Psoas muscle (tissue), 8 donors: ENCODE measurements at regions of chr1 and their contacts with region 1.

Region 1: GRCh38 chr1:84620720-84621313 is 46.6 kb upstream of the CTBS start:
- DNase-seq: peak; percentile 74 to 87
- ATAC-seq: peak; percentile 92 to 98 (median 95)
- H3K4me3 ChIP-seq: peak overlapping the region; percentile 74
- H3K27ac ChIP-seq: no peak overlapping the region
- H3K4me1 ChIP-seq: no peaks in the 10 kb centered on the region
- H3K27me3 ChIP-seq: no peaks in the 10 kb centered on the region
- CTCF ChIP-seq: peak; percentile 95

Region 2: DNA sequence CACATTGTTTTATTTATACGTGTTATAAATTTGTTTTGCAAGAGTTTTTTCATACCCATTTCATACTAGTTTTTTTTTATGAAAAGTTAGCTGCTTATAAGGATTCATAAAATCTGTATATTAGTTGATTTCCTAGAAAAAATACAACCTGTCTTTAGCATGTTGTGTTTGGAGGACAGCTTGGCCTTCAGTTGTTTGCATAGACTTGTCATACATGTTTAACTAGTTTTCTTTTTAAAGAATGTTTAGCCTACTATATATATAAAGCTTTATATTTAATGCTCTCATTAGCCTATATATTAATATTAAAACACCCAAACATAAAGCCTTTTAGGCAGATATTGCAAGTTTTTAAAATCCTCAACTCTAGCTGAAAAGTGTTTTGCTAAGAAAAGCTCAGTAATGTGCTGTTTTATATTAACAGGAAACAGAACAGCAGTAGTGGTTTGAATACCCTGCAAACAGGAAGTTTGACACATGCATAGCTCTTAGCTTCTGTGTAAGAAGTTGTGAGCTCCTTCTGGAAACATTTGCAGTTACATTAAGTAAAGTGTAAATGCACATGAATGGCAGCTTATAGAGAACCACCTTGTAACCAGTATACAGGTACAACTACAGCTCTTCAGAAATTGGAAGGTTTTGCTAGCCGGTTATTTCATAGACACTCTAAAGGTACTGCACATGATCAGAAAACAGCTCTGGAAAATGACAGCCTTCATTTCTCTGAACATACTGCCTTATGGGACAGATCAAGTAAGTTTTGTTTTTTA is 476.8 kb before region 1 on chr1 and contains the start of gene PRKACB:
- intact Hi-C with region 1: loop called in 1 of 2 experiments (anchors 10 kb)
- DNase-seq: no peak
- ATAC-seq: no peak
- H3K4me3 ChIP-seq: peak within 1 kb of the TSS; percentile 26
- H3K27ac ChIP-seq: no peak within 1 kb of the TSS
- H3K4me1 ChIP-seq: no peaks in the 10 kb centered on the region
- H3K27me3 ChIP-seq: no peaks in the 10 kb centered on the region
- CTCF ChIP-seq: no peak
- total RNA-seq, gene PRKACB: 4.9 to 24.5 (median 13.6) TPM

Region 3: GRCh38 chr1:84214115-84214956 is 406.5 kb before region 1 on chr1:
- intact Hi-C with region 1: no loop called
- DNase-seq: no peak
- ATAC-seq: no peak
- H3K4me3 ChIP-seq: no peak overlapping the region
- H3K27ac ChIP-seq: no peak overlapping the region
- H3K4me1 ChIP-seq: no peaks in the 10 kb centered on the region
- H3K27me3 ChIP-seq: no peaks in the 10 kb centered on the region
- CTCF ChIP-seq: no peak

Region 4: DNA sequence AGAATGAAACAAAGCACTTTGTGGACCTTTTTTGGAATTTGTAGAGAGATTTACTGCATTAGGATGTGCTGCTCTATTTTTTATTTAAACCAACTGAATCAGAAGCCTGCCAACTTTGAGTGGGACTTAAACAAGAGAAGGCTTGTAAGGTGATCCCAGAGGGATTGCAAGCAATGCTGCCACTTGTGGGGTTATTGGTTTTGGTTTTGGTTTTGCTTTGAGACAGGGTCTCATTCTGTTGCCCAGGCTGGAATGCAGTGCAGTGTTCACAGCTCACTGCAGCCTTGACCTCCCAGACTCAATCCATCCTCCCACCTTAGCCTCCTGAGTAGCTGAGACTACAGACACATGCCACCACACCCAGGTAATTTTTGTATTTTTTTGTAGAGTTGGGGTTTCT is 82.2 kb before region 1 on chr1:
- intact Hi-C with region 1: no loop called
- DNase-seq: no peak
- ATAC-seq: no peak
- H3K4me3 ChIP-seq: no peak overlapping the region
- H3K27ac ChIP-seq: no peak overlapping the region
- H3K4me1 ChIP-seq: no peaks in the 10 kb centered on the region
- H3K27me3 ChIP-seq: no peaks in the 10 kb centered on the region
- CTCF ChIP-seq: no peak

Region 5: DNA sequence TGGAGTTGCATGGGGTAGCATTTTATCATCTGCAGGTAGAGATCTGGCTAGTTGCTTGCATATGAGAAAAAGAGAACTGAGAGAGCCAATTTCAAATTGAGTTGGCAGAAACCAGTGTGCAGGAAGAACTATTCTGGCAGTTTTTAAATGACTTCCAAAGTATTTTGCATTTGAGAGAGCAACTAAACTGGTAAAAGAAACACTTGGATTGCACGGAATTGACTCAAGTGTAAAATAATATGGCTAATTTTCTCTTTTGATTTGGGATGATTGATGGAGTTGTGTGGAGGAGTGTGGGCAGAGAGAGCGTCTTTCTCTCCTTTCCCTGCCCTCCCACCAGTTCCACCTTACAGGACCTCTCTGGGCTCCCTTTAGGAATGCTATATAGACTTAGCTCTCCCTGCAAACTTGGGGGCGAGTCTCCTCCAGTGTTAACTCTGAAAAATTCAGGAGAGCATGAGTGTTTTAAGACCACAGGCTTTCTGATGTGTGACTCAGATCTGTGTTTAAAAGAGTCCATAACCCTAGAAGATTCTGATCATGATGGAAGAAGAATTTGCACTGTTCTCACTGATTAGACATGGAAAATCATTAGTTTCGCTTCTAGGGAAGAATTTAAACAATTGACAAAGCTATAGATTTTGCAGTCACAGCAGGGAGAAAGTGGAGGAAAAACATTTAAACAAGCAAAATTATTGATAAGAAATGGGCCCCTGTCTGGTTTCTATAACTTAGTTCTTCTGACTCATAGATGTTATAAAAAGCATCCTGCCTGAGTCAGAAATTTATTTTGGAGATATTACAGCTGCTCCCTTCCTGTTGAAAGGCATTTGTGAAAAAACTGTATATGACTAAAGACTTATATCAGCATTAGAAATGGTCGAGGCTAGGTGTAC is 21.7 kb before region 1 on chr1:
- intact Hi-C with region 1: no loop called
- DNase-seq: no peak
- ATAC-seq: peak; percentile 63 to 82 (median 76)
- H3K4me3 ChIP-seq: no peak overlapping the region
- H3K27ac ChIP-seq: no peak overlapping the region
- H3K4me1 ChIP-seq: peaks cover 15% of the 10 kb centered on the region
- H3K27me3 ChIP-seq: no peaks in the 10 kb centered on the region
- CTCF ChIP-seq: no peak

Region 6: DNA sequence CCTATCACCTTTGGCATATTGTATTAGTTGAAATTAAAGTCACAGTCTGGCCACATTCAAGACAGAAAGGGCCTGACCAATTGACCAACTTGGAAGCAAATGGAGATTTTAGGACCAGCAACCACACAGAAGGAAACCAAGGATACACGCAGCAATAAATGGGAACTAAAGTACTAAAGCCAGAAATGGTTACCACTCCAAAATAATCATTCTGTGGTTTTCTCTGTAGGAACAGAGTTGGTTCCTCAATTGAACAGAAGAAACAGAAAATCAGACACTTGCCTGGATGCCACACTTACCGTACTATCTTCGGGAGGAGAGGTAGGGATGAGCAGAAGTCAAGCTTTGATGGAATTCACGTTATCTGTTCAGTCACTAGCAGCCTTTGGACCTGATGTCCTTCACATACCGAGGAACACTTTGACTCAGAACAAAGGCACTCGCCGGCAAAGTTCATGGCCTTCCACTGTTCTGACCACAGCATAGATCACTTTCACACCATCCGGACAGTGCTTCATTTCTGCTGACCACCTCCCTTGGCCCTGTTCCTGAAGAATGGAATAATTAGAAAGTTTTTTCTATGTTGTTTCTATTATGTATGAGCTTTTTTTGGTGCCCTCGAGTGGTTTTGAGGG is 175.3 kb after region 1 on chr1:
- intact Hi-C with region 1: no loop called
- DNase-seq: no peak
- ATAC-seq: no peak
- H3K4me3 ChIP-seq: no peak overlapping the region
- H3K27ac ChIP-seq: no peak overlapping the region
- H3K4me1 ChIP-seq: no peaks in the 10 kb centered on the region
- H3K27me3 ChIP-seq: no peaks in the 10 kb centered on the region
- CTCF ChIP-seq: no peak